ENCODE measurements at regions of chr2 and their contacts with region 1.

Region 1: DNA sequence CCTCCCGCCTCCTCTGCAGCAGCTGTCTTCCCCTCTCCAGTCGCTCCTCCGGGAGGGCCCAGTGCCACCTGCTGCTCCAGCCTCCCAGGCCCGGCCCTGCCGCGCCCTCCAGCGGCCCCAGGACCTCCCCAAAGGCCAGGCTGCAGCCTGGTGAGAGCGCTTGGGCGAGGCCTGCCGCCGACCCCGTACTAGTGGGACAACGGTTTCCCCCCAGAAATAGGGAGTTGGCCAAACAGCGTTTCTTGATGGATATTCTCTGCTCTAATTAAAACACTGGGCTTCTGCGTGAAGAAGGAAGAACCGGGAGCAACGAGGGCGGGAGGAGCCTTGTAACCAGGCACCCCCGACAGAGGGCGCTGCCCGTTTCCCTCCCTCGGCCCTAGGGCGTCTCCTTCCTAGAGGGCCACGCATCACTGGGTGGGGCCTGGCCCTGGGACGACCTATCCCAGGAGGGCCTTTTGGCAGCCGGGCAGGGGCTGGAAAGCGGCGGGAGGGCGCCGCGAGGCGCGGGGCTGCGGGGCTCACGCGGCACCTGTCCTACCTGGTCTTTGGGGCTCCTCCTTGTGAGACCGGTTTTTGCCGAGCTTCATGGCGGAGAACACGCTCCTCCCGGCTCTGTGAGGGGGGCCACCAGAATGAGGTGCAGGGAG is 25.4 kb upstream of the OTOF start:
- H3K4me3 ChIP-seq: peak overlapping the region; percentile 36
- H3K27ac ChIP-seq: no peak overlapping the region; the same call in 1 of the 2 replicates
- H3K4me1 ChIP-seq: no peaks in the 10 kb centered on the region; the same call in 1 of the 2 replicates
- CTCF ChIP-seq: peak; percentile 99

Region 2: DNA sequence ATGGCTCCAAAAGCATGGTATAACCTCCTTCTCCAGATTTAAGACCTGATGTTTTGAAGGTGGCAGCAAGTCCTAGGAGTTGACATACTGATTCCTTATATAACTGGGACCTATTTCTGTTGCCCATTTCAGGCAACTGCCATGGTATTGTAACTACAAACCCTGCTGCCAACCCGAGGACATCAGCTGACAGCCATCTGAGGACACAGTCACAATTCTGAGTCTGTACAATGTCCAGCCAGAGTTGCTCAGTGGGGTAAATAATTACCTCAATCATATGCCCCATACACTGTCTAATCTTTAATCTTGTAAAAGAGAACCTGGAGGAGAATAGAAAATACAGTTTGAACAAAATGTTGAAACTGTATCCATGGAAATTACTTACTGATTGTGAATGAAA is 339.1 kb before region 1 on chr2:
- CTCF ChIA-PET with region 1: no interaction called
- POLR2A ChIA-PET with region 1: no interaction called
- H3K4me3 ChIP-seq: no peak overlapping the region
- H3K27ac ChIP-seq: no peak overlapping the region
- H3K4me1 ChIP-seq: no peaks in the 10 kb centered on the region
- CTCF ChIP-seq: no peak

Region 3: GRCh38 chr2:26492749-26493515 is 10.4 kb before region 1 on chr2:
- CTCF ChIA-PET with region 1: interaction called, 13 read pairs
- POLR2A ChIA-PET with region 1: no interaction called
- H3K4me3 ChIP-seq: no peak overlapping the region
- H3K27ac ChIP-seq: no peak overlapping the region
- H3K4me1 ChIP-seq: no peaks in the 10 kb centered on the region
- CTCF ChIP-seq: no peak

Region 4: GRCh38 chr2:26521054-26521912 is 17.9 kb after region 1 on chr2:
- CTCF ChIA-PET with region 1: interaction called, 15 read pairs
- POLR2A ChIA-PET with region 1: interaction called, 4 read pairs
- H3K4me3 ChIP-seq: no peak overlapping the region
- H3K27ac ChIP-seq: no peak overlapping the region
- H3K4me1 ChIP-seq: no peaks in the 10 kb centered on the region
- CTCF ChIP-seq: peak; percentile 25; the same call in 1 of the 2 replicates

Measured in HEK293 (cell line).